ENCODE measurements at regions of chr11 and their contacts with region 1.

Region 1: GRCh38 chr11:11028017-11028692 is 170.3 kb upstream of the ZBED5 start:
- DNase-seq: peak; percentile 50
- H3K4me3 ChIP-seq: no peak overlapping the region
- H3K27ac ChIP-seq: no peak overlapping the region
- H3K4me1 ChIP-seq: peaks cover 20% of the 10 kb centered on the region
- H3K27me3 ChIP-seq: no peaks in the 10 kb centered on the region
- CTCF ChIP-seq: peak; percentile 96

Region 2: DNA sequence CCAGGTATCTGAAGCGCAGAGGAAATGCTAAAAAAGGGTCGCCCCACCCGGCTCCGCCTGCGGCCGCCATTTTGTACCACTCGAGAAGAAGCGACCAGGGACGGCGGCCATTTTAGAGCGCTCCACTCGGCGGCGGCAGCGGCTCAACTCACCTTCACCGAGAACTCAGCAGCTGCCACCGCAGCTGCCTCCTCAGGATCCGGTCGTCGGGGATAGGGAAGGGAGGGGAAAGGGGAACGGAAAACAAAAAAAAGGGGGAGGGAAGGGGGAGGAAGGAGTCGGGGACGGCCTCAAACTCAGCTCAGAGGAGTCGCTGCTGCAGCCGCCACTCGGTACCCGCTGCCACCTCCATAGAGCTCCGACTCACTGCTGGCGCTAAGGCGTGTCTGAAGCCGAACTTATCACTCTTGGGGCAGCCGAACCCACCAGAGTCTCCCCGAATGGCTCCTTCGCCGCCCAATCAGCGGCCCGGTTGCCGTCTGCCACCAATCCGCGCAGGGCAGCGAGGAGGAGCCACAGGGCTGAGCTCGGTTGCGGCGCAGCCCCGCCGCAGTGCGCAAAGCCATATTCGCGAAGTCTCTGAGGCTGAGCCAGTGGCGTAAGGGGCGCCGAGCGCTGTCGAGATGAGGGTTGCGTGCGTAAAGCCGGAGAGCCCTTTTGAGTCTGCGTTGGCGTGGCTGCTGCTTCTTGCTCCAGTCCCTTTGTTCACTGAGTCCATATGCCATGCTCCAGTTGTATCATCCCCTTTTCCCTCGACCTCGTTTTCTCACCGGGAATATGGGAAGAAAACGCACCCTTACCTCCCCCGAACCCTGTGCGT is 219.4 kb before region 1 on chr11 and contains the start of gene EIF4G2:
- CTCF ChIA-PET with region 1: interaction called, 3 read pairs
- dilution Hi-C with region 1: no loop called
- in situ Hi-C with region 1: no loop called
- intact Hi-C with region 1: loop called (anchors 1 kb)
- DNase-seq: peak; percentile 99
- H3K4me3 ChIP-seq: peak within 1 kb of the TSS; percentile 64 to 89 (median 86)
- H3K27ac ChIP-seq: peak within 1 kb of the TSS; percentile 83
- H3K4me1 ChIP-seq: peaks cover 23% of the 10 kb centered on the region
- H3K27me3 ChIP-seq: no peaks in the 10 kb centered on the region
- CTCF ChIP-seq: no peak
- total RNA-seq, gene EIF4G2: 737 to 956 TPM

Region 3: GRCh38 chr11:10943968-10944367 is 84.2 kb before region 1 on chr11:
- CTCF ChIA-PET with region 1: no interaction called
- dilution Hi-C with region 1: no loop called
- in situ Hi-C with region 1: no loop called
- intact Hi-C with region 1: no loop called
- DNase-seq: no peak
- H3K4me3 ChIP-seq: no peak overlapping the region
- H3K27ac ChIP-seq: no peak overlapping the region
- H3K4me1 ChIP-seq: no peaks in the 10 kb centered on the region
- H3K27me3 ChIP-seq: no peaks in the 10 kb centered on the region
- CTCF ChIP-seq: no peak

Region 4: DNA sequence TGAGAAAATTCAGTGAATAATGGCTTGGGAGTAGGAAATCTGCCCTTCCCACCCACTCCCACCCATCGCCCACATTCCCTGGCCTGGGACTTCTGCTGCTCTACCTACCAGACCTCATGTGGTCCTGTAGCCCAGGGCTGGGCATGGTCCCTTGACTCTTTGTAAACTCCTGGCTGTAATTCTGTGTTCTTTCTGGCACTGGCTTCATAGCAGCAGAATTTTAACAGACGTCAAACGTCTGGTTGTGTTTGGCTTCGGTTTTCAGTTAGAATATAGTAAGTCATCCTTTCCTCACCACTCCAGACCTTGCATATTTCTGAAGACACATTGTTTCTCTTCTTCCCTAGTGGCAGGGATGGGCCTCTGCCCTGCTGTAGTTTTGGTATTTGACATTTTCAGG is 114.3 kb after region 1 on chr11:
- CTCF ChIA-PET with region 1: no interaction called
- dilution Hi-C with region 1: no loop called
- in situ Hi-C with region 1: no loop called
- intact Hi-C with region 1: no loop called
- DNase-seq: no peak
- H3K4me3 ChIP-seq: no peak overlapping the region
- H3K27ac ChIP-seq: no peak overlapping the region
- H3K4me1 ChIP-seq: no peaks in the 10 kb centered on the region
- H3K27me3 ChIP-seq: no peaks in the 10 kb centered on the region
- CTCF ChIP-seq: no peak

Region 5: GRCh38 chr11:11171854-11172253 is 143.7 kb after region 1 on chr11:
- CTCF ChIA-PET with region 1: no interaction called
- dilution Hi-C with region 1: no loop called
- in situ Hi-C with region 1: no loop called
- intact Hi-C with region 1: no loop called
- DNase-seq: no peak
- H3K4me3 ChIP-seq: no peak overlapping the region
- H3K27ac ChIP-seq: no peak overlapping the region
- H3K4me1 ChIP-seq: peaks cover 10% of the 10 kb centered on the region
- H3K27me3 ChIP-seq: no peaks in the 10 kb centered on the region
- CTCF ChIP-seq: no peak

Region 6: DNA sequence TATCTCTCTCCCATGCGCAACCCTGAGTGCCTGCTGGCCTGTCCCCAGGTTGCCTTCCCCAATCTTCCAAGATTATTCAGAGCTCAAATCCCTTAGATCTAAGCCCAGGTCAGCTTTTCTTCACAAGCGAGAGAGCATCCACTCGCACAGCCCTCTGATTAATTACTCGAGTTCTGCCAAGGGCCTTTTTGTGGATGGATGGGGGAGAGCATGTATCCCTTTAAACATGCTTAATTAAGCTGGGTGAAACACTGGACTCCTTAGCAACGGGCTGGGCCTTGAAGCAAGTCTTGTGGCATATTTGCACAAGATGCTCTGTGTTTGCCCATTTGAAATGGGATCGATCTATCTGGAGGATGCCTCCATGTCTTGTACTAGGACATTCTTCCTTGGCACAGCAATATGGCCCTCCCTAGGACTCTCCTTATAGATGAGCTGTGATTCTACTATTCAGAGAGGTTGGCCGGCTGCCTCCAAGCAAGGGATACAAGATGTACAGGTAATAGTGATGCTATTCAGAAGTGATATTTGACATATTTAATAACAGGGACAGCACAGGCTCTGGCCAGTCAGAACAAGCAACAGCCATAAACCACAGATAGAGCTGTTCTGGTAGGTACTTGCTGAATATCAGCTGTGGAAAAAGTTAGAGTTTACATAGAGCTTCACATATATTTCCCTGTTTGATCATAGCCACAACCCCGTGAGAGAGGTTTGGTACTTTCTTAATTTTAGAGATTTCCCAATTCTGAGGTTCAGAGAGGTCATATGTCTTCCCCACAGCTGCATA is 199.3 kb after region 1 on chr11:
- CTCF ChIA-PET with region 1: no interaction called
- dilution Hi-C with region 1: no loop called
- in situ Hi-C with region 1: no loop called
- intact Hi-C with region 1: no loop called
- DNase-seq: peak; percentile 62
- H3K4me3 ChIP-seq: no peak overlapping the region
- H3K27ac ChIP-seq: no peak overlapping the region
- H3K4me1 ChIP-seq: peaks cover 35% of the 10 kb centered on the region
- H3K27me3 ChIP-seq: no peaks in the 10 kb centered on the region
- CTCF ChIP-seq: no peak

Region 7: GRCh38 chr11:11265994-11266606 is 237.9 kb after region 1 on chr11:
- CTCF ChIA-PET with region 1: interaction called, 7 read pairs
- dilution Hi-C with region 1: no loop called
- in situ Hi-C with region 1: loop called in 1 of 2 experiments (anchors 5 kb)
- intact Hi-C with region 1: loop called (anchors 1 kb)
- DNase-seq: peak; percentile 56
- H3K4me3 ChIP-seq: no peak overlapping the region
- H3K27ac ChIP-seq: peak overlapping the region; percentile 5
- H3K4me1 ChIP-seq: peaks cover 20% of the 10 kb centered on the region
- H3K27me3 ChIP-seq: no peaks in the 10 kb centered on the region
- CTCF ChIP-seq: peak; percentile 96 to 97

Region 8: DNA sequence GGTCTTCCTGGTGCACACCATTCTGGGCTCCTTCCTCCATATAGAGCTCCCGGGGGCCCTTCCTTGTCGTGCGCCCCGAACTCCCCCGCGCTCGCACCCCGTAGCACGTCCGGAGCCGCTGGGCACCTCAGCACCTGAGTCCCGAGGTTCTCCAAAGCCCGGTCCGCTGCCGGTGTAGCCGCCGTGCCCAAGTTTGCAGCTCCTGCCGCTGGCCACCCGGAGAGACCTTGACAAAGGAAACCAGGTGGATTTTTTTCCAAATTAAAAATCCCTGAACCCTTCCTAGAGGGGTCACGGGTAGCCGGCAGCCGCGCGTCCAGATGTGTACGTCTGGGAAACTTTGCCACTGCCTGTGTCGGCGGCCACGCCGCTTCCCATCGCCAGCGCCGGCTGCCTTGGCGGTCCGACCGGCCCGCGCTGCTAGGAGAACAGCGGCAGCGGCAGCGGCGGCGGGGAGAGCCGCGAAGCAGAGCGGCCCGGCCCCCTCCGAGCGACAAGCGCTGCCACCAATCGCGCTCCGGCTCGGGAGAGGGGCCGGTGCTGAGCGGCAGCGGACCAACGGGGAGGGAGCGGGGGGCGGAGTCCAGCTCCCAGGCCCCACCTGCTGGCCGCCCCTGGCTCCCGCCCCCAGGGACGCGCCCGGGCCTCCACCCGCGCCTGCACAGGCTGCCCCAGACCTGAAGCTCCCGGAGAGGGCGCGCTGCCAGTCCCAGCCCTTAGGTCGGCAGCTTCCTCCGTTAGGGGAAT is 593.6 kb after region 1 on chr11 and contains the start of gene GALNT18:
- CTCF ChIA-PET with region 1: no interaction called
- dilution Hi-C with region 1: no loop called
- in situ Hi-C with region 1: loop called in 1 of 2 experiments (anchors 25 kb)
- intact Hi-C with region 1: loop called (anchors 2 kb)
- DNase-seq: peak; percentile 97
- H3K4me3 ChIP-seq: peak within 1 kb of the TSS; percentile 68 to 75 (median 75)
- H3K27ac ChIP-seq: peak within 1 kb of the TSS; percentile 51
- H3K4me1 ChIP-seq: peaks cover 27% of the 10 kb centered on the region
- H3K27me3 ChIP-seq: no peaks in the 10 kb centered on the region
- CTCF ChIP-seq: peak; percentile 12 to 53
- total RNA-seq, gene GALNT18: 25.0 to 34.3 TPM

Region 9: GRCh38 chr11:11659567-11660362 is 631.6 kb after region 1 on chr11:
- CTCF ChIA-PET with region 1: no interaction called
- dilution Hi-C with region 1: no loop called
- in situ Hi-C with region 1: loop called in 1 of 2 experiments (anchors 25 kb)
- intact Hi-C with region 1: loop called (anchors 2 kb)
- DNase-seq: no peak
- H3K4me3 ChIP-seq: no peak overlapping the region
- H3K27ac ChIP-seq: no peak overlapping the region
- H3K4me1 ChIP-seq: no peaks in the 10 kb centered on the region
- H3K27me3 ChIP-seq: peaks cover 5% of the 10 kb centered on the region
- CTCF ChIP-seq: peak; percentile 14 to 36

Region 10: DNA sequence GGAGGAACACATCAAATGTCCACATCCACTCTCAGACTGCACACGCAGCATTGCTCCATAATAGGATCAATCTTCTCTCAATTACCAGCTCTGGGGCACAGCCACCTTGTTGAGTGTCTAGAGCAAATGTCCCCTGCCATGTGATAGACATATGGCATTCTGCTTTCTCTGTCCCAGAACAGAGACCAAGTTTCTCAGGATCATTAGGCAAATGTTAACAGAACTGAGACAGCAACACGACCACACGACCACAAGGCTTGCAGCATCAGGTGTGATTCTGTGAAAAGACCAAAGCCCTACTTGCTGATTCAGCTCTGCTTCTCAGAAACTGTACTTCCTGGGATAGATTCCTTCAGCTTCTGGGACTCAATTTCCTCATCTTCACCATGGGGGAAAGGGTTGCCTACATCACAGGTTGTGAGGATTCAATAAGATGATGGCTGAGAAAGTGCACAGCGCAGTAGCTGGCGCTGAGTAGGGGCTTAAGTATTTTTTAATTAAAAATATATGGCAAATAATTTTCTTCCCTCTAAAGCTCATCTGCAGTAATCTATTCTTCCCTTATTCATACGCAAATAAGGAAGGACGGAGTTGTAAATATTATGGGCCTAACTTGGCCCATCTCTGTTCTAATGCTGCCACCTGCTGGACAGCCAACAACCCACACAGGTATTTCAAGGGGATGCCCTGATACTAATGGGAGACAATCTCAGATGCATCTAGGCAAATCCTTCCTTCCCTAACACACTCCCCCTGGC is 759.3 kb after region 1 on chr11:
- CTCF ChIA-PET with region 1: no interaction called
- dilution Hi-C with region 1: loop called (anchors 25 kb)
- in situ Hi-C with region 1: loop called (anchors 10 to 25 kb)
- intact Hi-C with region 1: loop called (anchors 1 kb)
- DNase-seq: peak; percentile 52
- H3K4me3 ChIP-seq: no peak overlapping the region
- H3K27ac ChIP-seq: no peak overlapping the region
- H3K4me1 ChIP-seq: peaks cover 13% of the 10 kb centered on the region
- H3K27me3 ChIP-seq: no peaks in the 10 kb centered on the region
- CTCF ChIP-seq: peak; percentile 78 to 83